ENCODE measurements at regions of chr2 and their contacts with region 1.

Region 1: GRCh38 chr2:200306196-200306930 is at the start of gene SPATS2L:
- DNase-seq: peak; percentile 85 to 86
- ATAC-seq: peak; percentile 75 to 94 (median 89)
- H3K4me3 ChIP-seq: peak within 1 kb of the TSS; percentile 76 to 95 (median 91)
- H3K27ac ChIP-seq: peak within 1 kb of the TSS; percentile 90 to 97 (median 94)
- H3K4me1 ChIP-seq: peaks cover 0 to 49% (median 31%) of the 10 kb centered on the region in 9 donors
- H3K27me3 ChIP-seq: no peaks in the 10 kb centered on the region
- CTCF ChIP-seq: no peak
- total RNA-seq, gene SPATS2L: 48.4 to 104 (median 73.5) TPM

Region 2: GRCh38 chr2:199985625-199986207 is 320.6 kb before region 1 on chr2:
- intact Hi-C with region 1: loop called in 9 of 10 experiments (anchors 2 to 10 kb)
- DNase-seq: peak; percentile 17 to 59
- ATAC-seq: peak in 6 of 8 donors; percentile 32 to 87 (median 45)
- H3K4me3 ChIP-seq: no peak overlapping the region
- H3K27ac ChIP-seq: no peak overlapping the region
- H3K4me1 ChIP-seq: peaks cover 0 to 23% (median 14%) of the 10 kb centered on the region in 9 donors
- H3K27me3 ChIP-seq: no peaks in the 10 kb centered on the region
- CTCF ChIP-seq: peak; percentile 24 to 71 (median 59)

Region 3: GRCh38 chr2:200383383-200384110 is 77.2 kb after region 1 on chr2:
- intact Hi-C with region 1: loop called in 3 of 10 experiments (anchors 5 to 10 kb)
- DNase-seq: no peak
- ATAC-seq: peak in 6 of 8 donors; percentile 68 to 80 (median 75)
- H3K4me3 ChIP-seq: peak overlapping the region in 7 of 10 donors; percentile 21 to 46 (median 34)
- H3K27ac ChIP-seq: peak overlapping the region in 9 of 10 donors; percentile 20 to 76 (median 49)
- H3K4me1 ChIP-seq: peaks cover 0 to 51% (median 27%) of the 10 kb centered on the region in 9 donors
- H3K27me3 ChIP-seq: no peaks in the 10 kb centered on the region
- CTCF ChIP-seq: no peak

Region 4: DNA sequence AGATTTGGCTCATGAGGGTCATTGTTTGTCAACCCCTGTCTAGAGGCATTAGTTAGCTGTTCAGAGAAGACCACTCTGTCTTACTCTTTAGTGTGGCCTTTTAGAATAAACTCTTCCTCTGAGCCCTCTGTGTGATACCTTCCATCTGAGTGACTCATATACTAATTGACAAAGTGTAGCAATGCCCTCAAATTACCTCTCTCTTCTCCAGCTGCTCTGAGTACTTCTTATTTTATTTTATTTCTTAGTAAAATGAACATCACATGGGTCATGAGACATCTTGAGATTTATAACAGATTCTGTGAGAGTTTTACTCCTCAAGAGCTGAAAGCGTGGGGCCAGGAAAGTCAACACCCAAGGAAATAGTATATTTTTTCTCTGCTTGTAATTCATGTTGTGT is 136.1 kb after region 1 on chr2:
- intact Hi-C with region 1: loop called in 1 of 10 experiments (anchors 10 kb)
- DNase-seq: no peak
- ATAC-seq: peak in 6 of 8 donors; percentile 39 to 74 (median 54)
- H3K4me3 ChIP-seq: no peak overlapping the region
- H3K27ac ChIP-seq: no peak overlapping the region
- H3K4me1 ChIP-seq: peaks cover 0 to 29% (median 11%) of the 10 kb centered on the region in 9 donors
- H3K27me3 ChIP-seq: no peaks in the 10 kb centered on the region
- CTCF ChIP-seq: no peak

Region 5: DNA sequence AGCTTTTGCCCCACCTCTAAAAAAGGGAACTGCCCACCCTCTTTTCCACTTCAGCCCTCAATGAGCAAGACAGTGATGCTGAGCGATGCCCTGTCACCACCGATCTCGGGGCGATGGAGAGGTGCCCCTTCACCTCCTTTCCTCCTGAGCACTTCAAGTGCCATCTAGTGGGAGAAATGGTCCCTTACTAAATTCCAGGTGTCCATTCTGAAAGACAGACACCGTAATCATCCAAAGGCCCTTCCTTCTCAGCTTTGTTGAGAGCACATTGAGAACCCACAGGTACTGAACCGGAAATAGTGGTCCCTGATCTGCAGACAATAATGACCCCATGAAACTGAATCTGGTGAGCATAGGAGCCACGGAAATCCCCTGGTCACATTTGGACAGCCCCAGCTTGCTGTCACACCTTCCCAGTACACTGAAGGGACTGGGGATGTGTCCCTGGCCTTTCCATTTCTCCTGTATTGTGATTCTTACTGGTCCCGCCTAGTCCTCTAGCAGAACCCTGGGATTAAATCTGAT is 165.0 kb after region 1 on chr2:
- intact Hi-C with region 1: loop called in 7 of 10 experiments (anchors 5 to 10 kb)
- DNase-seq: no peak
- ATAC-seq: no peak
- H3K4me3 ChIP-seq: no peak overlapping the region
- H3K27ac ChIP-seq: no peak overlapping the region
- H3K4me1 ChIP-seq: peaks cover 0 to 13% (median 0%) of the 10 kb centered on the region in 9 donors
- H3K27me3 ChIP-seq: no peaks in the 10 kb centered on the region
- CTCF ChIP-seq: peak in 8 of 9 donors; percentile 23 to 61 (median 50)